IMR-90 (cell line): ENCODE measurements at regions of chrX and their contacts with region 1.

Region 1: DNA sequence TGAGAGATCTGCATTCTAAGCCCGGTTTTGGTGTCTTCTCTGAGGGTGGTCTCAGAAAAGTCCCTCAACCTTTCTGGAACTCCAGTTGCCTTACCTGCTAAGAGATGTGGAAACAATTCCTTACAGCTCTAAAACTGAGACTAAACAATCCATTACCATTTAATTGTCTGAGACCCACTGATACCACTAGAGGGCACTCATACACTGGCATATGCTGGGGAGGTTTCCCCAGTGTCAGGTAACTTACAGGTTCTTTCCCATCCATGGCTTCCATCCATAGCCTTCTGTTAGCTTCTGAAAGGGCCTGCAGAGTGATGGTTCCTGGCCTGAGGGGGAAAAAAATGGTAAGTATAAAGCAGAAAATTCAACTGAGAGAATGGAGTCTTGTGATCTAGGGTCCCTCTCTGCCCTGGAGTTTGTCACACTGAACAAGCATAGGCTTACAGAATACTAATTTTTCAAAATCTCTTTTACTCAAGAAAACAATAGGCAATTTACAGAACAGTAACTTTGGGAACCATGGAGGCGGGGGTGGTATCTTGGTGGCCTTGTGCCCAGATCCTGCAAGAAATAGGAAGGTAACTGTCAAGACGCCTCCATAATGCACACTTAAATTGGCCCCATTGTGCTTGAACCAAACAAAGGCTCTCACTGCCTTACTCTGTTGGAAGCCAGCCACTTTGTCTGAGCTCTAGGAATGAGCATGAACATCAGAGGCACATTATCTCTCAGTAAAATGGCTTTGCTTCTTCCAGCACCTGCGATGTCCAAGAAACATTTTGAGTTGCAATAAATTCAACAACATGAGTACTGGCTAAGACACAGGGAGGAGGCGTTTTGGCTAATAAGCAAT is 236.1 kb downstream of the OPHN1 start:
- DNase-seq: peak; percentile 57
- ATAC-seq: peak; percentile 75
- H3K4me3 ChIP-seq: no peak overlapping the region
- H3K27ac ChIP-seq: no peak overlapping the region
- H3K4me1 ChIP-seq: no peaks in the 10 kb centered on the region
- H3K27me3 ChIP-seq: no peaks in the 10 kb centered on the region; the same call in none of the 2 replicates
- CTCF ChIP-seq: peak; percentile 82
- POLR2A ChIP-seq: peak; percentile 41; the same call in 1 of the 2 replicates
- RAD21 ChIP-seq: peak; percentile 89

Region 2: DNA sequence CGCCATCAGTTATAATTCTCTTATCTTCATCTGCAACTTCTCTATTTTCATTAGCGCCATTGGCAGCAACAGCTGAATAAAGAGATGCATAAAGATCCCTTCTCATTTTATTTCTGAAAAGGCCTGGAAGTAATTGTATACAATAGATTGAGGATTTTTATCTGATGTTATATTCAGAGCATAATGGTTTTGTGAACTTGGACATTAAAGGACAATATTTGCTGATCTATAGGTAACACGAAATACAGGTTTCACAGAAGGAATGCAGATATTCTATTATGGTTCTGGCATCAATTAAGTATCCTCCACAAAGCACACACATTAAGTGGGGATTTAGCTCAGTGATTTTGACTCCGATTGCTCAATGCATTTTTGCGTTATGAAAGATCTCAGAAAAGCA is 404.6 kb before region 1 on chrX:
- CTCF ChIA-PET with region 1: no interaction called
- POLR2A ChIA-PET with region 1: no interaction called
- dilution Hi-C with region 1: no loop called
- in situ Hi-C with region 1: no loop called
- intact Hi-C with region 1: no loop called
- DNase-seq: no peak
- ATAC-seq: no peak
- H3K4me3 ChIP-seq: no peak overlapping the region
- H3K27ac ChIP-seq: no peak overlapping the region
- H3K4me1 ChIP-seq: no peaks in the 10 kb centered on the region
- H3K27me3 ChIP-seq: no peaks in the 10 kb centered on the region; the same call in 1 of the 2 replicates
- CTCF ChIP-seq: no peak
- POLR2A ChIP-seq: no peak
- RAD21 ChIP-seq: no peak

Region 3: DNA sequence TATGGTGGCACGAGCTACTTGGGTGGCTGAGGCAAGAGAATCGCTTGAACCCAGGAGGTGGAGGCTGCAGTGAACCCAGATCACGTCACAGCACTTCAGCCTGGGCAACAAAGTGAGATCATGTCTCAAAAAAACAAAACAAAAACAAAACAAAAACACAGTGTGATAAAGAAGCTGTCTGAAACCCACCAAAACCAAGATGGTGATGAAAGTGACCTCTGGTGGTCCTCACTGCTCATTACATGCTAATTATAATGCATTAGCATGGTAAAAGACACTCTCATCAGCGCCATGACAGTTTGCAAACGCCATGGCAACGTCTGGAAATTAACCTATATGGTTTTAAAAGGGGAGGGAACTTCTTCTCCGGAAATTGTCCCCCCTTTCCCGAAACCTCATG is 265.5 kb after region 1 on chrX:
- CTCF ChIA-PET with region 1: interaction called, 4 read pairs
- POLR2A ChIA-PET with region 1: no interaction called
- dilution Hi-C with region 1: no loop called
- in situ Hi-C with region 1: loop called (anchors 5 kb)
- intact Hi-C with region 1: loop called (anchors 1 kb)
- DNase-seq: peak; percentile 47
- ATAC-seq: peak; percentile 77
- H3K4me3 ChIP-seq: no peak overlapping the region
- H3K27ac ChIP-seq: no peak overlapping the region
- H3K4me1 ChIP-seq: no peaks in the 10 kb centered on the region
- H3K27me3 ChIP-seq: no peaks in the 10 kb centered on the region; the same call in 1 of the 2 replicates
- CTCF ChIP-seq: peak; percentile 56
- POLR2A ChIP-seq: no peak
- RAD21 ChIP-seq: peak; percentile 53

Region 4: GRCh38 chrX:68498508-68499379 is 301.6 kb after region 1 on chrX and contains the start of gene YIPF6:
- CTCF ChIA-PET with region 1: no interaction called
- POLR2A ChIA-PET with region 1: no interaction called
- dilution Hi-C with region 1: no loop called
- in situ Hi-C with region 1: loop called (anchors 10 kb)
- intact Hi-C with region 1: loop called (anchors 1 kb)
- DNase-seq: peak; percentile 72
- ATAC-seq: peak; percentile 98
- H3K4me3 ChIP-seq: peak within 1 kb of the TSS; percentile 97
- H3K27ac ChIP-seq: peak within 1 kb of the TSS; percentile 100
- H3K4me1 ChIP-seq: no peaks in the 10 kb centered on the region; the same call in 1 of the 2 replicates
- H3K27me3 ChIP-seq: peaks cover 3% of the 10 kb centered on the region
- CTCF ChIP-seq: no peak
- POLR2A ChIP-seq: peak; percentile 96
- RAD21 ChIP-seq: no peak
- total RNA-seq, gene YIPF6: 22.4 and 30.8 TPM in 2 replicates

Region 5: GRCh38 chrX:68710870-68711576 is 513.9 kb after region 1 on chrX:
- CTCF ChIA-PET with region 1: no interaction called
- POLR2A ChIA-PET with region 1: no interaction called
- dilution Hi-C with region 1: no loop called
- in situ Hi-C with region 1: loop called (anchors 25 kb)
- intact Hi-C with region 1: loop called (anchors 5 kb)
- DNase-seq: peak; percentile 53
- ATAC-seq: peak; percentile 70
- H3K4me3 ChIP-seq: no peak overlapping the region
- H3K27ac ChIP-seq: no peak overlapping the region
- H3K4me1 ChIP-seq: no peaks in the 10 kb centered on the region
- H3K27me3 ChIP-seq: peaks cover 22% of the 10 kb centered on the region; the same call in 1 of the 2 replicates
- CTCF ChIP-seq: peak; percentile 57
- POLR2A ChIP-seq: no peak
- RAD21 ChIP-seq: peak; percentile 76

Region 6: GRCh38 chrX:69387567-69388487 is 1190.7 kb after region 1 on chrX:
- CTCF ChIA-PET with region 1: no interaction called
- POLR2A ChIA-PET with region 1: no interaction called
- dilution Hi-C with region 1: no loop called
- in situ Hi-C with region 1: loop called (anchors 25 kb)
- intact Hi-C with region 1: loop called (anchors 5 kb)
- DNase-seq: peak; percentile 21
- ATAC-seq: peak; percentile 85
- H3K4me3 ChIP-seq: no peak overlapping the region
- H3K27ac ChIP-seq: no peak overlapping the region
- H3K4me1 ChIP-seq: no peaks in the 10 kb centered on the region
- H3K27me3 ChIP-seq: peaks cover 56% of the 10 kb centered on the region
- CTCF ChIP-seq: peak; percentile 66
- POLR2A ChIP-seq: no peak
- RAD21 ChIP-seq: peak; percentile 72